Activated CD8-positive, alpha-beta T cell treated with anti-CD3 and anti-CD28 coated beads, Interleukin-2, amount 10 ng/mL, durations not matched to agents 7 days and 5 days (primary cell): ENCODE measurements at regions of chr5 and their contacts with region 1.

Region 1: GRCh38 chr5:157718519-157718918 is 12.7 kb upstream of the THG1L start:
- DNase-seq: peak; percentile 34
- ATAC-seq: peak; percentile 92
- H3K4me3 Mint-ChIP-seq: no peak overlapping the region
- H3K27ac Mint-ChIP-seq: peak overlapping the region; percentile 66
- H3K4me1 Mint-ChIP-seq: peaks cover 26% of the 10 kb centered on the region
- H3K27me3 Mint-ChIP-seq: peaks cover under 1% of the 10 kb centered on the region

Region 2: DNA sequence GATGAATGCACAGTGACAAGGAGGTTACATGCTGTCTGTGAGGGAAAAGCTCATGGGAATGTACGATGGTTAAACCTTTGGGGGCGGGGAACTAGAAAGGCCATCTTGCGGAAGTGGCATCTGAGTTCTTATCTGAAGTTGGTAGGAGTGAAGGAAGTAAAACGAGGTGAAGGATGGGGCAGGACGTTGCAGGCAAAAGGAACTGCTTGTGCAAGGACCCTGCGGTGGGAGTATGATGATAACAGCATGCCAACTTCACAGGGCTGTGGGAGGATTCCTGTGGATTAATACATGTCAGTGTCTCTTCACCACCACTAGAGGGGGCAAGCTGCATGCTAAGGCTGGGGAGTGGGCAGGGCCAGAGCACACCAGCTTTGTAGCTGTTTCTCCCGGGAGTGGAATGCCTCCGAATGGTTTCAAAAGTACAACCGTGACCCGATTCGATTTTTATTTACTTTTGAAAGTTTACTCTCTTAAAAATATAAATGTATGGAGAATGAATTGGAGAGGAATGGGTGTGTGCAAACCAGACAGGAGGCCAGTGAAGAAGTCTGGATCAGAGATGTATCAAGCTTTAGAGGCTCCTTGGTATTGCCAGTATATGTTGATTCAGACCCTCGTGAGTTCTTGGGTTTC is 390.1 kb before region 1 on chr5:
- CTCF ChIA-PET with region 1: interaction called, 19 read pairs
- POLR2A ChIA-PET with region 1: interaction called, 3 read pairs
- DNase-seq: peak; percentile 68
- ATAC-seq: peak; percentile 96
- H3K4me3 Mint-ChIP-seq: no peak overlapping the region
- H3K27ac Mint-ChIP-seq: peak overlapping the region; percentile 77
- H3K4me1 Mint-ChIP-seq: peaks cover 25% of the 10 kb centered on the region
- H3K27me3 Mint-ChIP-seq: no peaks in the 10 kb centered on the region

Region 3: DNA sequence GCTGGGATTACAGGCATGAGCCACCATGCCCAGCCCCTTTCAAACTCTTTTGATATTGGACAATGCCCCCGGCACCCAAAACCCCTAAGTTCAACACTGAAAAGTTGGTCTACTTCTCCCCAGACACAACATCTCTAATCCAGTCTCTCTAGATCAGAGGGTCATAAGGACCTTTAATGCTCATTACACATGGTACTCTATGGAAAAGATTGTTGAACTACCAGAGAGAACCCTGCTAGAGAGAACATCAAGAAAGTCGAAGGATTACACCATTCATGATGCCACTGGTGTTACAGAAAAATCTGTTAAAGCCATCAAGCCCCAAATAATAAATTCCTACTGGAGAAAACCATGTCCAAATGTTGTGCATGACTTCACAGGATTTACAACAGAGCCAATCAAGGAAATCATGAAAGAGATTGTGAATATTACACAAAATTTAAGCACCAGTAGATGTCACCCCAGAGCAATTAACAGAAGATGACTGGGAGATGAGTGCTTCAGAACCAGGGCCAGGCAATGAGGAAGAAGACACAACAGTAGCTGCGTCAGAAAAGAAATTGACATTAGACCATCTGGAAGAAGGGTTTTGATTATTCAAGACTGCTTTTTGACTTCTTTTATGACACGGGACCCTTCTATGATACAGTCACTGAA is 286.8 kb before region 1 on chr5:
- CTCF ChIA-PET with region 1: interaction called, 49 read pairs
- POLR2A ChIA-PET with region 1: no interaction called
- DNase-seq: peak; percentile 58
- ATAC-seq: peak; percentile 91
- H3K4me3 Mint-ChIP-seq: no peak overlapping the region
- H3K27ac Mint-ChIP-seq: no peak overlapping the region
- H3K4me1 Mint-ChIP-seq: peaks cover 3% of the 10 kb centered on the region
- H3K27me3 Mint-ChIP-seq: peaks cover 42% of the 10 kb centered on the region

Region 4: GRCh38 chr5:157540707-157541446 is 177.6 kb before region 1 on chr5:
- CTCF ChIA-PET with region 1: interaction called, 12 read pairs
- POLR2A ChIA-PET with region 1: no interaction called
- DNase-seq: peak; percentile 60
- ATAC-seq: peak; percentile 67
- H3K4me3 Mint-ChIP-seq: peak overlapping the region; percentile 53
- H3K27ac Mint-ChIP-seq: peak overlapping the region; percentile 82
- H3K4me1 Mint-ChIP-seq: peaks cover 81% of the 10 kb centered on the region
- H3K27me3 Mint-ChIP-seq: no peaks in the 10 kb centered on the region

Region 5: DNA sequence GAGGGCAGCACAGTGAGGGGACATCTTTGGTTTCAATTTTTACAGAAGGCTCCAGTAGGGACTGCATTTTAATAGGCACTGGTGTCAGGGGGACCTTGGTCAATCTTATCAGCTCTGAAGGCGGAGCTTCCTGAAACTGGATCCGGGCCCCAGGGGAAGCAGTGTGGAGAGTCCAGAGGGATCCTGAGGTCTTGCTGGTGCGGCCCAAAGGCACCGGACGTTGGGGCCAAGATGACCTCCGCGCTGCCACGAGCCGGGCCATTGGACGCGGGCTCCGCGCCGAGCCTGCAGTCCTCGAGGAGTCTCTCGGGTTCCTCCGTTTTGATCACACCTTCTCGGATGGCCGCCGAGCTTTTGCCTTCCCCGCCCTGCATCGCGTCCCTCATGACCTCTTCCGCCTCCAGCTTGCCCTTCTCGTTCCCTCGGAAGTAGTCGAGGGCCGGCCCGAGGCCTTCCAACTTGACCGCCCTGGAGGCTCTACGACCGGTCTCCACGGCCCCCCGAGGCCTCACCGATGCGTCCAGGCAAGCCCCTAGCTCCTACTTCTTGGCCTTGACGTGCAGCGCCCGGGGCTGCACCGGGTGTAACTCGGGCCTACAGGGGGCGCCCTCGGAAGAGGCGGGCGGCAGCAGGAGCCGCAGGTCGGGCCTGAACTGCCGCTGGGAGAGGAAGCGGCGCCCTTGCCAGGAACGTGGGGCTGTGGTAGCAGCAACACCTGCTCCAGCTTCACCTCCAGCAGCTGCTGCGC is 28.4 kb before region 1 on chr5:
- CTCF ChIA-PET with region 1: no interaction called
- POLR2A ChIA-PET with region 1: no interaction called
- DNase-seq: no peak
- ATAC-seq: no peak
- H3K4me3 Mint-ChIP-seq: no peak overlapping the region
- H3K27ac Mint-ChIP-seq: no peak overlapping the region
- H3K4me1 Mint-ChIP-seq: no peaks in the 10 kb centered on the region
- H3K27me3 Mint-ChIP-seq: no peaks in the 10 kb centered on the region

Region 6: DNA sequence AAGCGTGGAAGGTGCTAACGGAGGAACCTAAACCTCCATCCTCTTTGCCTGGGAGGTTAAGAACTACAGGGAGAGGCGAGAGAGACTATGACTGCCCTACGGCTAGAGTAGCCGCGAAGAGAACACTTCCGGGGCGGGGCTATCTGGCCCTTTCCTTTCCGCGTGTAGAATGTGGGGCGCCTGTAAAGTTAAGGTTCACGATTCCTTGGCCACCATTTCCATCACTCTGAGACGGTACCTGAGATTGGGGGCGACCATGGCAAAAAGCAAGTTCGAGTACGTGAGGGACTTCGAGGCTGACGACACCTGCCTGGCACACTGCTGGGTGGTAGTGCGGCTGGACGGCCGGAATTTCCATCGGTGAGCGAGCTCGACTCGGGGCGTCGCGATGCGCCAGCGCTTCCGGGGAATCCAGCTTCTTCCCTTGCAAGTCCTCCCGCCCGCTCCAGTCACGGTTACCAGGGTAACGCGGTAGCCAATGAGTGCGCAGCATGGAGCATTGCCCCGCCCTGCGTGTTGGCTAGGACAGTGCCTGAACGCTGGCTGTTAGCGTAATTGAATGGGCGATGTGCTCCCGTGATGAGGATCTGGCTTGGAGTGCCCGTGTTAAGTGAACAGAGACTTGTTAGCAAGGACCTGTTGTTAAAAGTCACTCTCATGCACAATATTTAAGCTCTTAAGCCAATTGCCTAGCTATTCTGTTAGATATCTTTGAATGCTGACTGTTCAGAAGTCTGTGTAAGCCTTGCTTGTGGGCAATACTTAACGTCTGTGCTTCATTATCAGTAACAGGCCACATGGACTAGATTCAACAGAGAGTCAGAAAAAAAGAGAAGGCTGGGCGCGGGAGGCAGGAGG is 13.0 kb after region 1 on chr5 and contains the start of gene THG1L:
- CTCF ChIA-PET with region 1: interaction called, 19 read pairs
- POLR2A ChIA-PET with region 1: no interaction called
- DNase-seq: peak; percentile 99
- ATAC-seq: peak; percentile 98
- H3K4me3 Mint-ChIP-seq: peak within 1 kb of the TSS; percentile 89
- H3K27ac Mint-ChIP-seq: peak within 1 kb of the TSS; percentile 94
- H3K4me1 Mint-ChIP-seq: peaks cover 20% of the 10 kb centered on the region
- H3K27me3 Mint-ChIP-seq: no peaks in the 10 kb centered on the region
- total RNA-seq, gene THG1L: 12.4 to 13.4 TPM

Region 7: GRCh38 chr5:157820593-157821252 is 102.2 kb after region 1 on chr5:
- CTCF ChIA-PET with region 1: no interaction called
- POLR2A ChIA-PET with region 1: no interaction called
- DNase-seq: peak; percentile 49
- ATAC-seq: no peak
- H3K4me3 Mint-ChIP-seq: no peak overlapping the region
- H3K27ac Mint-ChIP-seq: no peak overlapping the region
- H3K4me1 Mint-ChIP-seq: peaks cover 23% of the 10 kb centered on the region
- H3K27me3 Mint-ChIP-seq: no peaks in the 10 kb centered on the region

Region 8: GRCh38 chr5:157900644-157901043 is 182.1 kb after region 1 on chr5:
- CTCF ChIA-PET with region 1: no interaction called
- POLR2A ChIA-PET with region 1: no interaction called
- DNase-seq: no peak
- ATAC-seq: no peak
- H3K4me3 Mint-ChIP-seq: no peak overlapping the region
- H3K27ac Mint-ChIP-seq: no peak overlapping the region
- H3K4me1 Mint-ChIP-seq: no peaks in the 10 kb centered on the region
- H3K27me3 Mint-ChIP-seq: no peaks in the 10 kb centered on the region